ENCODE measurements at regions of chr18 and their contacts with region 1.

Region 1: GRCh38 chr18:21489119-21489750 is 111.3 kb downstream of the ESCO1 start:
- DNase-seq: peak in 1 of 5 donors; percentile 23
- H3K4me3 ChIP-seq: no peak overlapping the region
- H3K27ac ChIP-seq: no peak overlapping the region
- H3K4me1 ChIP-seq: no peaks in the 10 kb centered on the region
- H3K27me3 ChIP-seq: no peaks in the 10 kb centered on the region
- CTCF ChIP-seq: peak in 2 of 3 donors; percentile 15 to 38
- EP300 ChIP-seq: no peak
- POLR2A ChIP-seq: no peak

Region 2: DNA sequence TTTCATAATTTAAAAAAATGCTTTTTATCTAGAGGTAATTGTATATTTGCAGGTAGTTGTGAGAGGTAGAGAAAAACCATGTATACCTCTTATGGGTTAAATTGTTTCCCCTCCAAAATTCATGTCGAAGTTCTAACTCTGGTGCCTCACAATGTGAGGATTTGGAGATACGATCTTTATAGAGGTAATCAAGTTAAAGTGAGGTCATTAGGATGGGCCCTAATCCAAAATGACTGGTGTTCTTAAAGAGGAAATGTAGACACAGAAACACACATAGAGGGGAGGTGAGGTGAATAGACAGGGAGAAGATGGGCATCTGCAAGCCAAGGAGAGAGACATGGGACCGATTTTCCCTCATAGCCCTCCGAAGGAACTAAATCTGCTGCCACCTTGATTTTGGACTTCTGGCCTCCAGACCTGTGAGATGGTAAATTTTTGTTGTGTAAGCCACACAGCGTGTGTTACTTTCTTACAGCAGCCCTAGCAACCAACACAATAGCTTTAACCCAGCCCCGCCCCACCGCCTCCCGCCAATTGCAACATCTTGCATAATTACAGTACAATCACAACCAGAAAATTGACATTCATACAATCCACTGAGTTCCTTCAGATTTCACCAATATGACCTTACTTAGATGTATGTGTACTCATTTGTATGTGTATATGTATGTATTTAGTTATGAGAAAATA is 460.2 kb after region 1 on chr18:
- intact Hi-C with region 1: loop called in 1 of 4 experiments (anchors 5 kb)
- DNase-seq: no peak
- H3K4me3 ChIP-seq: no peak overlapping the region
- H3K27ac ChIP-seq: no peak overlapping the region
- H3K4me1 ChIP-seq: no peaks in the 10 kb centered on the region
- H3K27me3 ChIP-seq: no peaks in the 10 kb centered on the region
- CTCF ChIP-seq: no peak
- EP300 ChIP-seq: no peak
- POLR2A ChIP-seq: no peak

Measured in ovary (tissue), 10 donors.